ENCODE measurements at regions of chr19 and their contacts with region 1.

Region 1: GRCh38 chr19:43820098-43820883 is 6.8 kb upstream of the ZNF283 start:
- DNase-seq: no peak
- H3K4me3 Mint-ChIP-seq: peak overlapping the region; percentile 74
- H3K27ac Mint-ChIP-seq: peak overlapping the region; percentile 15
- H3K4me1 Mint-ChIP-seq: peaks cover 7% of the 10 kb centered on the region
- H3K27me3 Mint-ChIP-seq: no peaks in the 10 kb centered on the region
- CTCF ChIP-seq: no peak

Region 2: DNA sequence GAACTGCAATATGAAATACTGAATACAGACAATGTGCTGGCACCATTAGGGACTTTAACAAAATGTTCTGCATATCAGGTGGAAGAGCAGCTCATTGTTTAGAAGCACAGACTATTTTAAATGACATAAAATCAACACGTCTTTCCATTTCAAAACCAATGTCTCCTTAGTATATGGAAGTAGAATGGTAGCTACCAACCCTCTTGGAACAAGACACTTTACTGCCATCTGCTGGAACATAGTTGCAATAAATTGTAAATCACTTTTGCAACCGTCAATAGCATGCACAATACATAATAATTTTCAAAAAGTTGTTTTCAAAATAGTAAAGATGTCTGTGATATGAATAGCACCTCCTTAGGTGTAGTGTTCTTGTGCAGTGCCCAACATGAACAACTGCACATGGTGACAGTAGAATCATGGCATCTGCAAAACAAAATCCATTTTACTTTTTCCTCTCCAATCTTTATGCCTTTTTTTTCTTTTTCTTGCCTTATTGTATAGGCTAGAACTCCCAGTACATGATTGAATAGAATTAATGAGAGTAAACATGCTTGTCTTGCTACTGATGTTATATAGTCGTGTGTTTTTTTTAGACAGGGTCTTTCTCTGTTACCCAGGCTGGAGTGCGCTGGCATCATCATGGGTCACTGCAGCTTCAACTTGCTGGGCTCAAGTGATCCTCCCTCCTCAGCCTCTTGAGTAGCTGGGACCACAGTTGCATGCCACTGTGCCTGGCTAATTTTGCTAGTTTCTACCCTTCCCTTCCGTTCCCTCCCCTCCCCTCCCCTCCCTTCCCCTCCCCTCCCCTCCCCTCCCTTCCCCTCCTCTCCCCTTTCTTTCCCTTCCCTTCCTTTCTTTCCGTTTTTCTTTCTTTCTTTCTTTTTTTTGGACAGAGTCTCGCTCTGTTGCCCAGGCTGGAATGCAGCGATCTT is 10.3 kb before region 1 on chr19:
- CTCF ChIA-PET with region 1: interaction called, 16 read pairs
- POLR2A ChIA-PET with region 1: no interaction called
- intact Hi-C with region 1: no loop called
- DNase-seq: peak; percentile 74
- H3K4me3 Mint-ChIP-seq: no peak overlapping the region
- H3K27ac Mint-ChIP-seq: no peak overlapping the region
- H3K4me1 Mint-ChIP-seq: peaks cover 6% of the 10 kb centered on the region
- H3K27me3 Mint-ChIP-seq: peaks cover 11% of the 10 kb centered on the region
- CTCF ChIP-seq: peak; percentile 60

Measured in MCF 10A (cell line).